ENCODE measurements at regions of chr7 and their contacts with region 1.

Region 1: GRCh38 chr7:87458148-87458547 is 17.3 kb downstream of the ABCB4 start:
- DNase-seq: no peak

Region 2: GRCh38 chr7:87435546-87435945 is 22.6 kb before region 1 on chr7:
- intact Hi-C with region 1: loop called in 1 of 2 experiments (anchors 1 kb)
- DNase-seq: no peak

Region 3: GRCh38 chr7:87474533-87475358 is 16.6 kb after region 1 on chr7:
- intact Hi-C with region 1: no loop called
- DNase-seq: no peak

Region 4: GRCh38 chr7:87517136-87517815 is 59.1 kb after region 1 on chr7:
- intact Hi-C with region 1: no loop called
- DNase-seq: no peak

Region 5: GRCh38 chr7:87767797-87768196 is 309.6 kb after region 1 on chr7:
- intact Hi-C with region 1: no loop called
- DNase-seq: no peak

Measured in posterior vena cava (tissue), 2 donors.